PC-9 (cell line): ENCODE measurements at regions of chrX and their contacts with region 1.

Region 1: GRCh38 chrX:53732797-53733196 is 46.3 kb upstream of the HUWE1 start:
- DNase-seq: no peak
- H3K4me3 ChIP-seq: no peak overlapping the region
- H3K27ac ChIP-seq: no peak overlapping the region
- H3K4me1 ChIP-seq: no peaks in the 10 kb centered on the region
- H3K27me3 ChIP-seq: no peaks in the 10 kb centered on the region
- CTCF ChIP-seq: no peak

Region 2: DNA sequence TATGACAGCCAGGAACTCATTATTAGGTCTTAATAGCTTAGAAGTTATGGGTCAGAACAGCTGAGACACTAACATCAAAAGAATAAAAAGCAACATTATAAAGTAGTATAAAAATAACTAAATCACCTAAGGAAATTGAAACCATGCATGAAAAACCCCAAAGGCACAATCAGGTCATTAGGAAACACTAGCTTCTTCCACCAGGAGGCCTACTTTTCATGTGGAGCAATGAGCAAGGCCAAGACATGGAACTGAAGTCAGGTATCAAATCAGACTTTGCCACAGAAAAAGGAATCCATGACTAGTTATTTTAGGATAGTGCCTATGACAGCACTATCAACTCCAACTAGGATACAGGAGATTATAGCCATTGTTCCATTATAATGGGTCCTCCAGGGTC is 54.1 kb before region 1 on chrX:
- CTCF ChIA-PET with region 1: no interaction called
- POLR2A ChIA-PET with region 1: no interaction called
- intact Hi-C with region 1: no loop called
- DNase-seq: no peak
- H3K4me3 ChIP-seq: no peak overlapping the region
- H3K27ac ChIP-seq: no peak overlapping the region
- H3K4me1 ChIP-seq: no peaks in the 10 kb centered on the region
- H3K27me3 ChIP-seq: no peaks in the 10 kb centered on the region
- CTCF ChIP-seq: no peak; the same call in 1 of the 2 replicates

Region 3: DNA sequence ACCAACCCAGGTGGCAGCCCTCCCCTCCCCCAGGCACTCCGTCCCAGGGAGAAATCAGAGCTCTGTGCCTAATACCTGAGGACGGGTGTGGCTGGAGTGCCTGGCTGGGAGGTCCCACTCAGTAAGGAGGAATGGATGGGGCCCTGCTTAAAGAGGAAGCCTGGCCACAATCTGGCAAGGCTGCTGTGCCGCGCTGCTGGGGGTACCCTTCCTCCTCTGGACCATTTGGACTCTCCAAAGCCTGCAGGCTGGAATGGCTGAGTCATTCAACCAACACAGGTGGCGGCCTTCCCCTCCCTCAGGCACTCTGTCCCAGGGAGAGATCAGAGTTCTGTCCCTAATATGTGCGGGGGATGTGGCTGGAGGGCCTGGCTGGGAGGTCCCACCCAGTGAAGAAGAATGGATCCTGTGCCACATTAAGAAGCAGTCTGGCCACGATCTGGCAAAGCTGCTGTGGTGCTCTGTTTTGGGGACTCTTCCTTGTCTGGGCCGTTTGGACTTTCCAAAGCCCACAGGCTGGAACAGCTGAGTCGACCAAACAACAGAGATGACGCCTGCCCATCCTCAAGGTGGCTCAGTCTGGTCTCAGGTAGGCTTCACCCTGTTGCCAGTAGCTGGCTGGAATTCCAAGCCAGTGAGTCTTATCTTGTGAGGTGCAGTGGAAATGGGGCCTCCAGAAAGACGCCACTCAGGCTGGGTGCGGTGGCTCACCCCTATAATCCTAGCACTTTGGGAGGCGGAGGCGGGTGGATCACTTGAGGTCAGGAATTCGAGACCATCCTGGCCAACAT is 81.0 kb after region 1 on chrX:
- CTCF ChIA-PET with region 1: no interaction called
- POLR2A ChIA-PET with region 1: no interaction called
- intact Hi-C with region 1: loop called (anchors 5 kb)
- DNase-seq: peak; percentile 61 to 81
- H3K4me3 ChIP-seq: no peak overlapping the region
- H3K27ac ChIP-seq: no peak overlapping the region
- H3K4me1 ChIP-seq: no peaks in the 10 kb centered on the region; the same call in 1 of the 2 replicates
- H3K27me3 ChIP-seq: no peaks in the 10 kb centered on the region
- CTCF ChIP-seq: no peak